HepG2 (cell line): ENCODE measurements at regions of chr3 and their contacts with region 1.

Region 1: DNA sequence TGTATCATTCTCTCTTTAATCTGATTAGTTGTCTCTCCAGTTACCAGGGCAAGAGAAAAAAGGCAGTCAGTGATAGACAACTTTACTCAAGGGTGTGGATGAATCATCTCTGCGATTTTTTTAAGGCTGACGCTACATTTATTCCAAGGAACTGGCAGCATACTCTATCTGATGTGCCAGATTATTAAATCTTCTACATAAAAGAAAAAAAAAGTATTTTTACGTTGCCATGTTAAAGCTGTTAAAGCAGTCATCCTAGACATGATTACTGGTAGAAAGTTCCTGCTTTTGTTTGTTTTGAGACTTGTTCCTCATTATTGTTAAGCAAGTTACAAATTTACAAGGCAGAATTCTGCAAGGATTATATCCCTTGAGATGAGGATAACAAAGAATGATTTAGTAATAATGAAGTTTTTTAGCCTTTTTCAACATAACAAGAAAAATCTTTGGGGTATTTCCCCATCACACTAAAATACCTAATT is 121.7 kb downstream of the CBLB start:
- DNase-seq: no peak
- ATAC-seq: no peak; the same call in 2 of the 3 replicates
- H3K4me3 ChIP-seq: no peak overlapping the region
- H3K27ac ChIP-seq: no peak overlapping the region
- H3K4me1 ChIP-seq: peaks cover 16% of the 10 kb centered on the region
- H3K27me3 ChIP-seq: no peaks in the 10 kb centered on the region
- CTCF ChIP-seq: no peak
- EP300 ChIP-seq: no peak
- POLR2A ChIP-seq: no peak
- RAD21 ChIP-seq: no peak

Region 2: GRCh38 chr3:105359098-105359762 is 387.9 kb before region 1 on chr3:
- CTCF ChIA-PET with region 1: no interaction called
- POLR2A ChIA-PET with region 1: no interaction called
- in situ Hi-C with region 1: no loop called
- intact Hi-C with region 1: loop called (anchors 5 kb)
- DNase-seq: no peak
- ATAC-seq: no peak
- H3K4me3 ChIP-seq: no peak overlapping the region
- H3K27ac ChIP-seq: no peak overlapping the region
- H3K4me1 ChIP-seq: no peaks in the 10 kb centered on the region
- H3K27me3 ChIP-seq: no peaks in the 10 kb centered on the region; a peak in 1 of 5 replicates
- CTCF ChIP-seq: no peak
- EP300 ChIP-seq: no peak
- POLR2A ChIP-seq: no peak
- RAD21 ChIP-seq: no peak